Sciatic nerve (tissue), 2 donors: ENCODE measurements at regions of chr4 and their contacts with region 1.

Region 1: GRCh38 chr4:41339812-41340809 is 83.4 kb downstream of the UCHL1 start:
- DNase-seq: no peak
- ATAC-seq: peak; percentile 96

Region 2: GRCh38 chr4:41644288-41644914 is 304.3 kb after region 1 on chr4:
- intact Hi-C with region 1: loop called (anchors 10 kb)
- DNase-seq: peak; percentile 87
- ATAC-seq: peak; percentile 96

Region 3: DNA sequence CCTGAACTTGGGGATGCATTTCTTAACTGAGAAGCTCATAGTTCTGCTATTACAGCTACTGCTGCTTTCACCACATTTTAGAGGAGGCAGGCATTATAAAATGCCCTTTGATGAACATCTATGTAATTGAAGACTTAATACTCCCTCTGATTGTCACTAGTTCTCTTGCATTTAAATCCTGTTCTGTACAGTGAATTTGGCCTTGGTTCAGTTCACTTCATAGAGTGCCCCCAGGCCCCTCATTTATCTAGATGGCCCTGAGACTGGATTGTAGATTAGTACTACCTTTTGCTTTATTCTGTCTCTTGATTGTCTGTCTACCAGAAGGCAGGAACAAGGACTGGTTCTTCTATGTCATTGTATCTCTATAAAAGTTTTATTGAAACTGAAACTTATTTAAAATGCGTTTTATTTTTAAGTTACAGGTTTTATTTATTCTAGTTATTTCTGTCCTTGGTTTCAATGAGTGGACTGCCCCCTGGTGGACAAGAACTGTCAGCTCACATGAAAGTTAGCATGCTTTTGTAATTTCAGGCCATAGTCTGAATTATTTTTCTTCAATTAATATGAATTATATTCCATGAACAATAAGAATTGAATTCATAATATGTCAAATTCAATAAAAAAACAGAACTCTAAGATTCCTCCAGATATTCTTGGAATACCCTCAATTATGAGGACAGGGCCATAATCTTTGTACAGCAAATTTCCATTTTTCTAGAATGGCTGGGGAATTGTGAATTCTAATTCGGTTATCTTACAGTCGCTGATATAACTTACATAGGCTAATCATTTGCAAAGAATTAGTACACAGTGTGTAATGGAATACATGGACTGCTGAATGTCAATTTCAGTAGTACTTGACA is 547.9 kb after region 1 on chr4:
- intact Hi-C with region 1: no loop called
- DNase-seq: no peak
- ATAC-seq: no peak